Activated naive CD4-positive, alpha-beta T cell treated with anti-CD3 and anti-CD28 coated beads for 36 hours (primary cell): ENCODE measurements at regions of chr13 and their contacts with region 1.

Region 1: DNA sequence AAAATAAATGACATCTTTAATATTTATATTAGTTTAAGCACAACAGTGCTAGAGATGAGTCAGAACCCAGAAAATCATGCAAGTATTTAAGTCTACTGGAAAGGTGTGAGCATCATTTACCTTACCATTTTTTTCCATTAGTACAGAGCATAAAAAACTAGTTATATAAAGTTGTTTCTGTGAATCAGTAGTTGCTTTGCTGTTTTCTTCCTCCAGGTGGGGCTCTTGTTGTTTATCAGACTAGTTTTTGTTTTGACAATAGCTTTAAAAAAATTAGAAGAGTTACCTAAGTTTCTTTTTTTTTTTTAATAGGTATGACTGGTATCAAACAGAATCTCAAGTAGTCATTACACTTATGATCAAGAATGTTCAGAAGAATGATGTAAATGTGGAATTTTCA is 12.7 kb downstream of the SUGT1 start:
- DNase-seq: no peak
- H3K4me3 Mint-ChIP-seq: no peak overlapping the region
- H3K27ac Mint-ChIP-seq: no peak overlapping the region
- H3K4me1 Mint-ChIP-seq: peaks cover 10% of the 10 kb centered on the region
- H3K27me3 Mint-ChIP-seq: no peaks in the 10 kb centered on the region

Region 2: DNA sequence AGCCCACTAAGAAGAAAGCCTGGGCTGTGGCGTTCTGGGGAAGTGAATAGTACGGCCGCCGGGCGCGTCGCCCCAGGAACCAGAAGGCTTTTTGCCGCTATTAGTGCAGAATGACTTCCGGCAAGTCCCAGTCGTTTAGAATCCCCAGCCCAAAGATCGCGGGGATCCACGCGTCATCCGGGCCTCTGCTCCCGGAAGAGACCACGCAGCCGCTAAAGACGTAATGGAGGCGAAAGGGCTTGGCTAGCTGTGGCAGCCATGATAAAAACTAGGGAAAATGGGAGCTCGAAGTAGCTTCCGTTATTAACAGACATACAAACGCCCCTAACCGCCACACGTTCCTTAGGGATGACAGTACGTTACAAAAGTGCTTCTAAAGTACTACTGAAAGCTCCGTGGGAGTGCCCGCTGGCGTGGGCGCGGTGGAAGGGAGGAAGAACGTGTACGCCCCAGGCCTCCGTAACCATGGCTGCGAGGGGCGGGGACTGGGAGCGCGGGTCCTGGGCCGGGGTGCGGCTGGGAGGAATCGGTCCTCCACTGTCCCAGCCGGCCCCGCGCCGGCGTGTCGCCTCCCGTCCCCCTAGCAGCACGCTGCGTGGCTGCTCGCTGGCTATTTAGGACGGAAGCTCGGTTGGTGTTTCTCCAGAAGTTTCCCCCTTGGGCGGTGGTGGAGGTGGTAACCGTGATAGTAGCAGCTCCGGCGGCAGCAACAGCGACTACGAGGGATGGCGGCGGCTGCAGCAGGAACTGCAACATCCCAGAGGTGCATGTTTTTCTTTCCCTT is 12.9 kb before region 1 on chr13 and contains the start of gene SUGT1:
- CTCF ChIA-PET with region 1: interaction called, 10 read pairs
- intact Hi-C with region 1: no loop called
- DNase-seq: peak; percentile 95
- H3K4me3 Mint-ChIP-seq: no peak within 1 kb of the TSS
- H3K27ac Mint-ChIP-seq: no peak within 1 kb of the TSS
- H3K4me1 Mint-ChIP-seq: peaks cover 14% of the 10 kb centered on the region
- H3K27me3 Mint-ChIP-seq: no peaks in the 10 kb centered on the region
- total RNA-seq, gene SUGT1: 42.7 to 44.1 TPM

Region 3: DNA sequence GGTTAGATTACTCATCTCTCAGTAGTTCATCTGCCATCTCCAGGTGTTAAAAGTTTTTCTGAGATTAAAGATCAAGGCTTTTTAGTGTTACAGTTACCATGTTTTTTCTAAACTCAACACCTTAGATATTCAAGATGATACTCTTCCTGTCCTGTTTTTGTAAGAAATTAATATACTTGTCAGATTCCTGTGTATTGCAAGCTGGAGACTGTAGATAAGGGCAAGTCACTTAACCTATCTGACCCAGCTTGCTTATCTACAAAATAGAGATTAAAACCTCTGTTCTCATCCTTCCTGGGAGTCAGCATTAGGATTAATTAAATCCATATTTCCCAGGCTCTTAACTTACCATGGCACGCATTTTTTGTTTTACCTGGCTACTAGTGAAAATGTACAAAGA is 12.5 kb after region 1 on chr13:
- CTCF ChIA-PET with region 1: interaction called, 15 read pairs
- intact Hi-C with region 1: no loop called
- DNase-seq: no peak
- H3K4me3 Mint-ChIP-seq: no peak overlapping the region
- H3K27ac Mint-ChIP-seq: no peak overlapping the region
- H3K4me1 Mint-ChIP-seq: peaks cover 4% of the 10 kb centered on the region
- H3K27me3 Mint-ChIP-seq: no peaks in the 10 kb centered on the region

Region 4: GRCh38 chr13:52695856-52696255 is 30.5 kb after region 1 on chr13:
- CTCF ChIA-PET with region 1: no interaction called
- intact Hi-C with region 1: no loop called
- DNase-seq: peak; percentile 63
- H3K4me3 Mint-ChIP-seq: no peak overlapping the region
- H3K27ac Mint-ChIP-seq: no peak overlapping the region
- H3K4me1 Mint-ChIP-seq: peaks cover 14% of the 10 kb centered on the region
- H3K27me3 Mint-ChIP-seq: no peaks in the 10 kb centered on the region

Region 5: DNA sequence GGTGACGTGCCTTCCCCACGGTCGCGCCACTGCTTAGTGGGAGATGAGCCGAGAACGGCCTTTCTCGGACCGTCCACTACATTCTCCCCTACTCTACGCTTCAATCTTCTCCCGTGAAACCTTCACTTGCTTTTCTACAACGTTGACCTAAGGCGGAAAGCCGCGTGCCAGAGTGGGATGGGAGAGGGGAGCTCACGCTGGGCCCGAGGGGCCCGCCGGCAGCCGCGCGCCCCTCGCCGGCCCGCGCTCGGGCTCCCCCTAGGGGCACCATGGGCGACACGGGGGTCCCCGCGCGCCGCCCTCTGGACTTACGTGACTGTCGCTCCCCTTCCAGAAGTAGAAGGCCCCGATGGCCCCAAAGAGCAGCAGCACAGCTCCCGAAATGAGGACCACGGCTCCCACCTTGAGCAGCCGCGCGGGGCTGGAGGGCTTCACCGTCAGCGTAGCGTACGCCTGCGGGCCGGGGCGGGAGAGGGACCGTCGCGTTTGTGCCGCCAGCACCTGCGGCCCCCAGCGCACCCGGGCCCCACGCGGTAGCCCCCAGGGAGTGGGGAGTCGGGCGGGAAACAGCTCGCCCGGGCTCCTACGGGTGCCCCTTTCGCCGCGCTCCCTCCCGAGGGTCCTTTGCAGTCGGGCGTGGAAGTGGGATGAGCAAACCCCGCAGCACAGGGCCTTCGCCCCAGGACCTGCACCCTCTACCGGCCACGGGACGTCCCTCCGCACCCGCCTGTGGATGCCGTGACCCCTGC is 73.6 kb after region 1 on chr13:
- CTCF ChIA-PET with region 1: interaction called, 5 read pairs
- intact Hi-C with region 1: loop called (anchors 5 kb)
- DNase-seq: no peak
- H3K4me3 Mint-ChIP-seq: peak overlapping the region; percentile 26
- H3K27ac Mint-ChIP-seq: no peak overlapping the region
- H3K4me1 Mint-ChIP-seq: peaks cover 6% of the 10 kb centered on the region
- H3K27me3 Mint-ChIP-seq: peaks cover 56% of the 10 kb centered on the region

Region 6: GRCh38 chr13:52809310-52809769 is 144.0 kb after region 1 on chr13:
- CTCF ChIA-PET with region 1: interaction called, 10 read pairs
- intact Hi-C with region 1: loop called (anchors 1 kb)
- DNase-seq: peak; percentile 64
- H3K4me3 Mint-ChIP-seq: no peak overlapping the region
- H3K27ac Mint-ChIP-seq: no peak overlapping the region
- H3K4me1 Mint-ChIP-seq: no peaks in the 10 kb centered on the region
- H3K27me3 Mint-ChIP-seq: peaks cover 8% of the 10 kb centered on the region

Region 7: GRCh38 chr13:52850396-52851136 is 185.2 kb after region 1 on chr13:
- CTCF ChIA-PET with region 1: no interaction called
- intact Hi-C with region 1: loop called (anchors 2 kb)
- DNase-seq: peak; percentile 69
- H3K4me3 Mint-ChIP-seq: peak overlapping the region; percentile 63
- H3K27ac Mint-ChIP-seq: no peak overlapping the region
- H3K4me1 Mint-ChIP-seq: peaks cover 28% of the 10 kb centered on the region
- H3K27me3 Mint-ChIP-seq: peaks cover 72% of the 10 kb centered on the region

Region 8: GRCh38 chr13:52947921-52948373 is 282.6 kb after region 1 on chr13:
- CTCF ChIA-PET with region 1: no interaction called
- intact Hi-C with region 1: no loop called
- DNase-seq: no peak
- H3K4me3 Mint-ChIP-seq: no peak overlapping the region
- H3K27ac Mint-ChIP-seq: no peak overlapping the region
- H3K4me1 Mint-ChIP-seq: no peaks in the 10 kb centered on the region
- H3K27me3 Mint-ChIP-seq: peaks cover 13% of the 10 kb centered on the region

Region 9: GRCh38 chr13:52968074-52968700 is 302.9 kb after region 1 on chr13:
- CTCF ChIA-PET with region 1: interaction called, 3 read pairs
- intact Hi-C with region 1: loop called (anchors 5 kb)
- DNase-seq: peak; percentile 73
- H3K4me3 Mint-ChIP-seq: no peak overlapping the region
- H3K27ac Mint-ChIP-seq: no peak overlapping the region
- H3K4me1 Mint-ChIP-seq: no peaks in the 10 kb centered on the region
- H3K27me3 Mint-ChIP-seq: peaks cover 11% of the 10 kb centered on the region

Region 10: DNA sequence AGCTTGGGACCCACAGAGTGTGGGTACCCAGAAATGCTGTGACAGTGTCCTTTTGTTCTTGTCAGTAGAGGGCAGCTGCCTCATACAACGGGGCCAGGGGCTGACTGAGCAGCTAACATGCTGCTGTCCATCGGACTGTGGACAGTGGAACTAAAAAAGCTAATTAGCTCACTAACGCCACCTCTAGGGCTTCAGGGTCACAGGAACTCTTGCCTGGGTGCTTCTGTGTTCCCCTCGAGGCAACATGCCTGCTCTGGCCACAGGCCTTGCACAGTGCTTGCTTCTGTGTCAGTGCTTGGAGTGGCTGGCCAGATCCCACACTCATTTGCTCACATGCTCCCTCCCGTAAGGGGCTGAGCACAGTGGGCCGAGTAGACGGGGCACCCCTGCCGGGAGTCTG is 740.3 kb after region 1 on chr13:
- CTCF ChIA-PET with region 1: no interaction called
- intact Hi-C with region 1: no loop called
- DNase-seq: no peak
- H3K4me3 Mint-ChIP-seq: no peak overlapping the region
- H3K27ac Mint-ChIP-seq: no peak overlapping the region
- H3K4me1 Mint-ChIP-seq: no peaks in the 10 kb centered on the region
- H3K27me3 Mint-ChIP-seq: peaks cover 2% of the 10 kb centered on the region